Activated CD4-positive, alpha-beta T cell treated with anti-CD3 and anti-CD28 coated beads for 36 hours (primary cell): ENCODE measurements at regions of chr2 and their contacts with region 1.

Region 1: DNA sequence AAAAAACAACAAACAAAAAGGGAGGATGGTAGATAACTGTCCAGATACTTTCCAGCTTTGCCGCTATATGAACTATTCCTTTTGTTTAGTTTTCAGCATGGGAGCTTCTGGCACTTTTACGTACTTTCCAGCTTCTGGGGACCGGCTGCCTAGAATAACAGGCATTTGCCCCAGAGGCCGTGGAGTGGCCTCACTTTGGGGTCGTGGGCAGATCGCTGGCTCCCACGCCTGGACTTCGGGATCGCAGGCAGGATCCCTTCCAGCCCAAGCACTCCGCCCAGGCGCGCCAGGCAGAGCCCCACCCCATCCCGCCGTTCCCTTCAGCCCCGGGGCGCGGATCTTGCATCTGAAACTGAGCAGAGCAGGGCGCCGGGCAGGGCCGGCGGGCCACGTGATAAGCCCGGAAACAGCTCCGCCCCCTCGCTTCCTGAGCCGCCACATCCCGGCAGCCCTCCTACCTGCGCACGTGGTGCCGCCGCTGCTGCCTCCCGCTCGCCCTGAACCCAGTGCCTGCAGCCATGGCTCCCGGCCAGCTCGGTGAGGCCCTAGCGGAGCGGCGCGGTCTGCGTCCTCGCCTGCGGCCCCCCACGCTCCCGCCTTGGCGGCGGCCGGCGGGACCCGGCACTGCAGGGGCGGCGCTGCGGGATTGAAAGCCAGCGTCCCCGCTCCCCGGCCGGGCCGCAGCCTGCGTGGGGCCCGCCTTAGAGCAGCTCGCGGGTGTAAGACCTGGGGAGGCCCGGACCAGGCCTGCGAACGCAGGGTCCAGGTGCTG is at the start of gene ATIC:
- DNase-seq: peak; percentile 96
- ATAC-seq: peak; percentile 98
- H3K4me3 Mint-ChIP-seq: peak within 1 kb of the TSS; percentile 97
- H3K27ac Mint-ChIP-seq: peak within 1 kb of the TSS; percentile 96
- H3K4me1 Mint-ChIP-seq: peaks cover 32% of the 10 kb centered on the region
- H3K27me3 Mint-ChIP-seq: peaks cover under 1% of the 10 kb centered on the region
- total RNA-seq, gene ATIC: 300 to 310 TPM

Region 2: GRCh38 chr2:214809751-214810564 is 501.9 kb before region 1 on chr2:
- CTCF ChIA-PET with region 1: no interaction called
- POLR2A ChIA-PET with region 1: interaction called, 4 read pairs
- intact Hi-C with region 1: loop called (anchors 1 kb)
- DNase-seq: peak; percentile 100
- ATAC-seq: peak; percentile 89
- H3K4me3 Mint-ChIP-seq: peak overlapping the region; percentile 88
- H3K27ac Mint-ChIP-seq: peak overlapping the region; percentile 73
- H3K4me1 Mint-ChIP-seq: peaks cover 23% of the 10 kb centered on the region
- H3K27me3 Mint-ChIP-seq: peaks cover 3% of the 10 kb centered on the region

Region 3: GRCh38 chr2:215269397-215270119 is 42.3 kb before region 1 on chr2:
- CTCF ChIA-PET with region 1: interaction called, 4 read pairs
- POLR2A ChIA-PET with region 1: interaction called, 10 read pairs
- intact Hi-C with region 1: no loop called
- DNase-seq: peak; percentile 71
- ATAC-seq: no peak
- H3K4me3 Mint-ChIP-seq: no peak overlapping the region
- H3K27ac Mint-ChIP-seq: no peak overlapping the region
- H3K4me1 Mint-ChIP-seq: peaks cover 15% of the 10 kb centered on the region
- H3K27me3 Mint-ChIP-seq: peaks cover 3% of the 10 kb centered on the region

Region 4: DNA sequence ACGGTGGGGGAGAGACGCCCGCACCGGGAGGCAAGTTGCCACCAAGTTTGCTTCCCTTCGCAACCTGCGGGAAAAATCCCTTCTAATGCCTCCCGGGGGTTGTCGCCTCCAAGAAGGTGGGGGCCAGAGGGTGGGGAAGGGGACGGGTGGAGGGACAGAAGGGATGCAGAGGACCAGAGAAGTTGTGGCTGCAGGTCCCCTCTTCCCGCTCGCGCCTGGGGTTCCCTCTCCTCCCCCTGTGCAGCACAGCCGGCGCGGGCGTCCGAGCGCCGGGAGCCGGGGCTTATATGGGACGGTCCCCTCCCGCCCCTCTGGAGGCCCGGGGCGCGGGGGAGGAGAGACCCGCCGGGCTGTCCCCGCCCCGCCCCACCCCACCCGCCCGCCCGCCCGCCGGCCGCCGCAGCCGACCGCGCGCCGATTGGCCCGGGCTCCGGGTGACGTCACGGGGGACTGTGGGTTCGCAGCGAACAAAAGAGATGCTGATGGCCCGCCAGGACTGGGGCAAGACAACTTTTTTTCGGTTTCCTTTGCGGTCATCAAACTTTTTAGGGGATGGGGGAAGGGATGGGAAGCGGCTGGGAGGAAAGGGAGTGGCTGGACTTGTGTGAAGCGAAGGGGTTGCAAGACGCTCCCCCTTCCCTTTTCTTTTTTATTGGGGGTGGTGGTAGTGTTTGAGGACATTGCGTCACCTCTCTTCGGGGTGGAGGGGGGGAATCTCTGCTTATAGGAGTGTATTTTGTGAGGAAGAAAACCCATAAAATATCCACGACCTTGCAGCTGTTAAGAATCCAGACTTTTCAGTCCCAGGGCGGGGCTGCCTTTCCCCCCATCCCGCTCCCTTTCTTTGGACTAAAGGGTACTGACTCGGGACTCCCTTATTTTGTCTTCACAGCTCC is 124.2 kb after region 1 on chr2 and contains the start of gene FN1:
- CTCF ChIA-PET with region 1: no interaction called
- POLR2A ChIA-PET with region 1: no interaction called
- intact Hi-C with region 1: loop called in 1 of 2 experiments (anchors 5 kb)
- DNase-seq: peak; percentile 77
- ATAC-seq: peak; percentile 75
- H3K4me3 Mint-ChIP-seq: peak within 1 kb of the TSS; percentile 70
- H3K27ac Mint-ChIP-seq: no peak within 1 kb of the TSS
- H3K4me1 Mint-ChIP-seq: peaks cover 13% of the 10 kb centered on the region
- H3K27me3 Mint-ChIP-seq: peaks cover 56% of the 10 kb centered on the region
- total RNA-seq, gene FN1: 0.59 to 0.70 TPM

Region 5: GRCh38 chr2:216013080-216013909 is 701.5 kb after region 1 on chr2 and contains the start of gene MREG:
- CTCF ChIA-PET with region 1: no interaction called
- POLR2A ChIA-PET with region 1: no interaction called
- intact Hi-C with region 1: loop called (anchors 5 kb)
- DNase-seq: peak; percentile 94
- ATAC-seq: peak; percentile 70
- H3K4me3 Mint-ChIP-seq: peak within 1 kb of the TSS; percentile 88
- H3K27ac Mint-ChIP-seq: peak within 1 kb of the TSS; percentile 81
- H3K4me1 Mint-ChIP-seq: peaks cover 60% of the 10 kb centered on the region
- H3K27me3 Mint-ChIP-seq: no peaks in the 10 kb centered on the region
- total RNA-seq, gene MREG: 9.1 to 9.8 TPM

Region 6: DNA sequence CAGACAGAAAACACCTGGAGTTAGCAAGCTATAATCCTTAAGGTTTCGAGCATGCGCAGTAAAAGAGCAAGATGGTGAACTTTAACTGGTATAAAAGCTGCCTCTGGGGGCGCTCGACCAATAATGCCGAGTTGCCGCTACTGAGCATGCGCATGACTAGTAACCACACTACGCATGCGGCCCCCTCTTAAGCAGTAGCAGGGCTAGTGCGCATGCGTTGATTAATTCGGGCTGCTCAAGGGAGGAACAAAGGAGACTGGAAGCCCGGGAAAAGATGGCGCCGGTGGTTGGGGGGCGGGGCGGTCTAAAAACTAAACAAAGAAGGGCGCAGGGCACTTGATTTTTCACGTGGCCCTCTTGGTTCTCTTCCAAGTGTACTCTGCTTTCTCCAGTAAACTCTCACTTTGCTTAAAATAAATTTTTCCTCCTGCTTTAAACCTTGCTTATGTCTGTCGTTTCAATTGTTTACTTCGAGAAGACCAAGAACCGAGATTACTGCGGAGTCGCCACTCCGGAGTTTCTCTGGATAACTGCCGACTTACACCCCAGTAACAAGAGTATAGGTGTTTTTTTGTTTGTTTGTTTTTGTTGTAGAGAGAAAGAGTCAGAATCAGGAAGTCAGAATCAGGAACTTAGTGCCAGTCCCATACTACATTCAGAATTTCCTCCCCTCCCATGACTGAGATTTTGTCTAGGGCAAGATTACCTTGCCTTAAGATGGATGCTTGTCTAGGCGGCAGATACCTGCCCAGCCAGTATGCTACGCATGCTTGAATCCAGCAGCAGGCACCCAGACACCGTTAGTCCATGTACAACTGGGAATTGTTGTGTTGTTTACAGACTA is 803.1 kb after region 1 on chr2:
- CTCF ChIA-PET with region 1: no interaction called
- POLR2A ChIA-PET with region 1: no interaction called
- intact Hi-C with region 1: loop called in 1 of 2 experiments (anchors 5 kb)
- DNase-seq: peak; percentile 98
- ATAC-seq: peak; percentile 81
- H3K4me3 Mint-ChIP-seq: peak overlapping the region; percentile 79
- H3K27ac Mint-ChIP-seq: peak overlapping the region; percentile 95
- H3K4me1 Mint-ChIP-seq: peaks cover 95% of the 10 kb centered on the region
- H3K27me3 Mint-ChIP-seq: no peaks in the 10 kb centered on the region

Region 7: GRCh38 chr2:216412022-216412999 is 1100.5 kb after region 1 on chr2 and contains the start of gene SMARCAL1:
- CTCF ChIA-PET with region 1: no interaction called
- POLR2A ChIA-PET with region 1: no interaction called
- intact Hi-C with region 1: loop called in 1 of 2 experiments (anchors 5 kb)
- DNase-seq: peak; percentile 100
- ATAC-seq: peak; percentile 93
- H3K4me3 Mint-ChIP-seq: peak within 1 kb of the TSS; percentile 94
- H3K27ac Mint-ChIP-seq: peak within 1 kb of the TSS; percentile 93
- H3K4me1 Mint-ChIP-seq: peaks cover 13% of the 10 kb centered on the region
- H3K27me3 Mint-ChIP-seq: no peaks in the 10 kb centered on the region
- total RNA-seq, gene SMARCAL1: 25.9 to 27.7 TPM